ENCODE measurements at regions of chr4 and their contacts with region 1.

Region 1: GRCh38 chr4:119212234-119212963 is at the start of gene USP53:
- DNase-seq: peak; percentile 98 to 99
- ATAC-seq: peak; percentile 98
- H3K4me3 ChIP-seq: peak within 1 kb of the TSS; percentile 80 to 93
- H3K27ac ChIP-seq: peak within 1 kb of the TSS; percentile 69 to 93
- H3K4me1 ChIP-seq: no peaks in the 10 kb centered on the region
- H3K27me3 ChIP-seq: no peaks in the 10 kb centered on the region
- total RNA-seq, gene USP53: 102 to 114 TPM

Region 2: DNA sequence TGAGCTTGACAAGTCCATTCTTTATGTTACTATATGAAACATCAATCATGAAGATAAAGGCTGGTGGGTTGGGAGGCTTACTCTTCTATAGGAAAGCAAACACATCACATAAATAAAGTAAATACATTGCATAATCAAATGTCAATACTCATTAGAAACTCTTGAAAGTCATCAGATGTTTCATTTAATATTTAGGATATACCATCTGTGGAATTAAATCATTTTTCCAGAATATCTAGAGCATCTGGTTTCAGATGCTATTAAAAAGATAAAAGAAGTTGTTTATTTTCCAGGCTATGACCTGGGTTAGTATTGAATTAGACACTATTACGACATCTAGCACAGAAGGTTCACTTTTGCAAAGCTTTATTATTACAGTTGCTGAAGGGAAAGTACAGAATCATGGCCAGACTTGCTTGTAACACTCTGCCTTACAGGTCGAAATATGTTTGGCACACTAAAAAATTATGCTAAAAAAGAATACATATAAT is 454.6 kb before region 1 on chr4:
- intact Hi-C with region 1: no loop called
- DNase-seq: no peak
- ATAC-seq: peak; percentile 55
- H3K4me3 ChIP-seq: no peak overlapping the region
- H3K27ac ChIP-seq: no peak overlapping the region
- H3K4me1 ChIP-seq: peaks cover 2 to 17% of the 10 kb centered on the region in 2 donors
- H3K27me3 ChIP-seq: no peaks in the 10 kb centered on the region

Region 3: DNA sequence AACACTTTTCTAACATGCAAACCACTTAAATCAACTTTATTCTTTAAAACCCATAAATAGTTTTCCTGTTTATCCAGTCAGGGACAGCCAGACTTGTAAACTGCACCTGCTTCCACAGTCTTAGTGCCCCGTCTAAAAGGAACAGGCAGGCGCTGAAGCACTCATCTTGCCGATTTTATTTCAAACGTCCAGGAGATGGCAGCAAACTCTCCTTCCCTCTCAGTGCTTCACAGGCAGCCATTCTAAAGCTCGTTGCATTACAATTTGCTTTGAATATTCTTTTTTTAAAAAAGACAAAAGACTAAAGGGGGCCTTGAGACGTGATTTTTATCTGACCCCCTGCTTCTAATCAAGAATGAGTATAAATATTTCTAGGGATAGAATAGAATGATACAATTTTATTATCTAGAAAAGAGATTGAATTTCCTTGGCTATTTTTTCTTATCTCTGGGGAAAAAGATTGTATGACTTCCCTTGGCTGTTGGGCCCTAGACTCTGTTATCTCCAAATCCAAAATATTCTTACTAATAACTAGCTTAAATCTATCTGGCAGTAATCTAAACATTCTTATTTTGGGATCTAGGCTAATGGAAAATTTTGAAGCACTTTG is 170.3 kb before region 1 on chr4:
- intact Hi-C with region 1: loop called (anchors 5 kb)
- DNase-seq: peak; percentile 50 to 59
- ATAC-seq: peak; percentile 78
- H3K4me3 ChIP-seq: peak overlapping the region in 1 of 2 donors; percentile 48
- H3K27ac ChIP-seq: peak overlapping the region in 1 of 2 donors; percentile 90
- H3K4me1 ChIP-seq: peaks cover 4 to 11% of the 10 kb centered on the region in 2 donors
- H3K27me3 ChIP-seq: no peaks in the 10 kb centered on the region

Region 4: DNA sequence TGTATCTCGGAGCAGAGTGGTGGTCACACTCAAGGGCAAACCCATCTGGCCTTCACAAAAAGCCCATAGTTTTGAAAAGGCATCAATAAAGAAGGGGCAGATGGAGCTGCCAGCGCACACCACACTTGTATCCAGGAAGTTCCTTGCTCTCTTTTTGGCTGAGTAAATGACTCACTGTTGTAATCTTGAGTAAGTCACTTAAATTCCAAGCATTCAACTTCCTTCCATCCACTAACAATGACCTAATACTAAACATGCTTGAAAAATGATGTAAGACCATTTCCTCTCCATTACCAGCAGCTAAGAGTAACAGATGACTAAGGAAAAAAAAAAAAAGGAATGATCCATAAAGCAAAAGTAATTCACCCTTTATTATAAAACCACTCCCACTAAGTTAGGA is 109.1 kb before region 1 on chr4:
- intact Hi-C with region 1: loop called (anchors 2 to 5 kb)
- DNase-seq: peak; percentile 75 to 83
- ATAC-seq: peak; percentile 84
- H3K4me3 ChIP-seq: no peak overlapping the region
- H3K27ac ChIP-seq: peak overlapping the region in 1 of 2 donors; percentile 75
- H3K4me1 ChIP-seq: peaks cover 5 to 8% of the 10 kb centered on the region in 2 donors
- H3K27me3 ChIP-seq: no peaks in the 10 kb centered on the region

Region 5: DNA sequence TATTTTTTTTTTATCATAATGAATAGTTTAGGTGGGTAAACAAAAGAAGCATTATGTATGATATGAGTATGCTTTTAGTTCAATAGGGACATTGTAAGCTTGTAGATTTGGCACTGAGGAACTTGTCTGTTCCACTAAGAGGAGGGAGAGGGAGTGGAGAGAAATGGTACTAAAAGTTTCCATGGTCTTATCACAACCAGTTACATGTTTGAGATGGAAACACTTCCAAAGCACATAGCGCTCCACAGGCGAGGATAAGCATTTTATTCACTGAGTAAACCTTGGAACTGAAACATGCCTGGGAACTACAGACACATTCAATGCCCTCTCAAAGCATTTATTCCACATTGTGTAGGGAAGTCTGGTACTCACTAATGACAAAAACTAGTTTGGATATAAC is 61.2 kb before region 1 on chr4:
- intact Hi-C with region 1: loop called in 1 of 2 experiments (anchors 5 kb)
- DNase-seq: no peak
- ATAC-seq: peak; percentile 76
- H3K4me3 ChIP-seq: no peak overlapping the region
- H3K27ac ChIP-seq: peak overlapping the region in 1 of 2 donors; percentile 28
- H3K4me1 ChIP-seq: no peaks in the 10 kb centered on the region
- H3K27me3 ChIP-seq: no peaks in the 10 kb centered on the region

Region 6: GRCh38 chr4:119261986-119262385 is 49.6 kb after region 1 on chr4:
- intact Hi-C with region 1: no loop called
- DNase-seq: no peak
- ATAC-seq: no peak
- H3K4me3 ChIP-seq: no peak overlapping the region
- H3K27ac ChIP-seq: no peak overlapping the region
- H3K4me1 ChIP-seq: peaks cover 0 to 1% of the 10 kb centered on the region in 2 donors
- H3K27me3 ChIP-seq: no peaks in the 10 kb centered on the region

Region 7: DNA sequence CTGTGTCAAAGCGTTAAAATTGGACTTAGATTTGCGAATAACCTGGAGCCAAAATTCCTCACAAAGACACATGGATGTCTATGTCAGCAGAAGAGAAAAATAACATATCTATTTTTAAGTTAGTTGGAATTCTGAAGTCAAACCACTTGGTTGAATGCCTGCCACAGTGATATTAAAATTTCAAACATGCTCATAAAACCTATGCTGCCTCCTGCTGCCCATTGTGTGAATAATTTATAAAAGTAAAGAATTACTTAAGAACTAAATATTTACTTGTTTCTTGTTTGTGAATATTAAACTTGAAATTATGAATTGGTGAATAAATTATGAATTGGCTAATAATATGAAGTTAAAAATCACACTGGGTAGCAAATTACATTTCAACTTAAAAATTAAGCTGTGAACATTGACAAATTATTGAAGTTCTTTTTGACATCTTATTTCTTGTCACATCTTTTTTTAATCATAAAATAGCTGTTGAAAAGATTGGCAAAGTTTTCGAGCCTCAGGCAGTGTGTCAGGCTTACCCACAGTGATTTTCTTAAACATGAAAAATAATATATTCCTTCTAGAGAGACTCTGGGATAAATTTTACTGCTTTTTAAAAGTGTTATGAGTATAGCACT is 74.1 kb after region 1 on chr4:
- intact Hi-C with region 1: loop called in 1 of 2 experiments (anchors 5 kb)
- DNase-seq: no peak
- ATAC-seq: peak; percentile 79
- H3K4me3 ChIP-seq: no peak overlapping the region
- H3K27ac ChIP-seq: no peak overlapping the region
- H3K4me1 ChIP-seq: peaks cover 0 to 5% of the 10 kb centered on the region in 2 donors
- H3K27me3 ChIP-seq: no peaks in the 10 kb centered on the region